Colonic mucosa (tissue), 4 donors: ENCODE measurements at regions of chr18 and their contacts with region 1.

Region 1: GRCh38 chr18:11937874-11938478 is 29.9 kb upstream of the MPPE1 start:
- DNase-seq: peak; percentile 87
- H3K4me3 ChIP-seq: no peak overlapping the region
- H3K27ac ChIP-seq: no peak overlapping the region
- H3K4me1 ChIP-seq: no peaks in the 10 kb centered on the region
- H3K27me3 ChIP-seq: no peaks in the 10 kb centered on the region
- CTCF ChIP-seq: peak; percentile 74

Region 2: DNA sequence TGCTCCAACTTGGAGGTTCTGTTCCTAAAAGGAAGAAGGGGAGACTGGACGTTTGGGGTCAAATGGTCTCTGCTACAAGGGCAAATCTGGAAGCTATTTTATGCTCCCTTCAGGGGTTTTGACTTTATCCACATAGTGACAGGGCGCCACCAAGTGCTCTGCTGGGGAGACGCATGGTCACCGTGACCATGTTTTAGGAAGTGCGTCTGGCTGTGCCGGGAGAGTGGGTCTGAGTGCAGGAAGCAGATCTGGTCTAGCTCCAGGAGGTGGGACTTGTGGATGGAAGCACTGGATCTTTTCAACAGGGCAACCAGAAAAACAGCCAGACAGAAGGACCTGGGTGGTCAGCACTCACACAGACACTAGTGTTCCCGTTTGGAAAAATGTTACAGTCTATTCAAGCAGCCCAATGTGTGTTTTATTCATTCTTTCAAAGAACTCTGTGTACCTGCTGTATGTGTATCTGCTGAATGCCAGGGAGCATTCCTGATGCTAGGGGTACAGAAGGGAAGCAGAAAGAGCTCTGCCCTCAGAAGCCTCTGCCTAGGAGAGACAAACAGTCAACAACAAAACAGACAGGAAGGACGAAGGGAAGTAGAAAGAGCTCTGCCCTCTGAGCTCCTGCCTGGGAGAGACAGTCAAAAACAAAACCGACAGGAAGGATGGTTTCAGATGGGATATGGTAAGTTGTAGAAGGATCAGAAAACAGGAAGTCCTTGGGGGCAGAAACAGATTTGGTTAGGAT is 57.6 kb after region 1 on chr18:
- intact Hi-C with region 1: loop called (anchors 2 kb)
- DNase-seq: peak; percentile 84
- H3K4me3 ChIP-seq: no peak overlapping the region
- H3K27ac ChIP-seq: peak overlapping the region; percentile 60
- H3K4me1 ChIP-seq: peaks cover 26% of the 10 kb centered on the region
- H3K27me3 ChIP-seq: no peaks in the 10 kb centered on the region
- CTCF ChIP-seq: peak; percentile 62

Region 3: GRCh38 chr18:12038639-12039417 is 100.9 kb after region 1 on chr18:
- intact Hi-C with region 1: loop called (anchors 5 kb)
- DNase-seq: peak; percentile 84
- H3K4me3 ChIP-seq: peak overlapping the region; percentile 64
- H3K27ac ChIP-seq: no peak overlapping the region
- H3K4me1 ChIP-seq: no peaks in the 10 kb centered on the region
- H3K27me3 ChIP-seq: no peaks in the 10 kb centered on the region
- CTCF ChIP-seq: peak; percentile 97

Region 4: GRCh38 chr18:12106471-12106870 is 168.5 kb after region 1 on chr18:
- intact Hi-C with region 1: no loop called
- DNase-seq: no peak
- H3K4me3 ChIP-seq: no peak overlapping the region
- H3K27ac ChIP-seq: no peak overlapping the region
- H3K4me1 ChIP-seq: no peaks in the 10 kb centered on the region
- H3K27me3 ChIP-seq: no peaks in the 10 kb centered on the region
- CTCF ChIP-seq: no peak